CD8-positive, alpha-beta T cell (primary cell): ENCODE measurements at regions of chr3 and their contacts with region 1.

Region 1: GRCh38 chr3:50245831-50246516 is 10.0 kb downstream of the GNAI2 start:
- DNase-seq: peak; percentile 90 to 99 (median 95)
- ATAC-seq: peak; percentile 81
- H3K4me3 ChIP-seq: peak overlapping the region; percentile 40 to 55
- H3K4me3 Mint-ChIP-seq: peak overlapping the region; percentile 75
- H3K27ac ChIP-seq: peak overlapping the region; percentile 32 to 88
- H3K27ac Mint-ChIP-seq: peak overlapping the region; percentile 94
- H3K4me1 ChIP-seq: peaks cover 87% of the 10 kb centered on the region
- H3K4me1 Mint-ChIP-seq: peaks cover 76% of the 10 kb centered on the region
- H3K27me3 ChIP-seq: no peaks in the 10 kb centered on the region
- H3K27me3 Mint-ChIP-seq: no peaks in the 10 kb centered on the region
- CTCF ChIP-seq: peak; percentile 80

Region 2: GRCh38 chr3:50201573-50202315 is 44.2 kb before region 1 on chr3:
- CTCF ChIA-PET with region 1: interaction called, 78 read pairs
- POLR2A ChIA-PET with region 1: no interaction called
- intact Hi-C with region 1: no loop called
- DNase-seq: no peak
- ATAC-seq: no peak
- H3K4me3 ChIP-seq: no peak overlapping the region
- H3K4me3 Mint-ChIP-seq: no peak overlapping the region
- H3K27ac ChIP-seq: no peak overlapping the region
- H3K27ac Mint-ChIP-seq: no peak overlapping the region
- H3K4me1 ChIP-seq: peaks cover 16% of the 10 kb centered on the region
- H3K4me1 Mint-ChIP-seq: peaks cover 6% of the 10 kb centered on the region
- H3K27me3 ChIP-seq: peaks cover 35 to 36% of the 10 kb centered on the region in 2 experiments
- H3K27me3 Mint-ChIP-seq: peaks cover 42% of the 10 kb centered on the region
- CTCF ChIP-seq: no peak

Region 3: DNA sequence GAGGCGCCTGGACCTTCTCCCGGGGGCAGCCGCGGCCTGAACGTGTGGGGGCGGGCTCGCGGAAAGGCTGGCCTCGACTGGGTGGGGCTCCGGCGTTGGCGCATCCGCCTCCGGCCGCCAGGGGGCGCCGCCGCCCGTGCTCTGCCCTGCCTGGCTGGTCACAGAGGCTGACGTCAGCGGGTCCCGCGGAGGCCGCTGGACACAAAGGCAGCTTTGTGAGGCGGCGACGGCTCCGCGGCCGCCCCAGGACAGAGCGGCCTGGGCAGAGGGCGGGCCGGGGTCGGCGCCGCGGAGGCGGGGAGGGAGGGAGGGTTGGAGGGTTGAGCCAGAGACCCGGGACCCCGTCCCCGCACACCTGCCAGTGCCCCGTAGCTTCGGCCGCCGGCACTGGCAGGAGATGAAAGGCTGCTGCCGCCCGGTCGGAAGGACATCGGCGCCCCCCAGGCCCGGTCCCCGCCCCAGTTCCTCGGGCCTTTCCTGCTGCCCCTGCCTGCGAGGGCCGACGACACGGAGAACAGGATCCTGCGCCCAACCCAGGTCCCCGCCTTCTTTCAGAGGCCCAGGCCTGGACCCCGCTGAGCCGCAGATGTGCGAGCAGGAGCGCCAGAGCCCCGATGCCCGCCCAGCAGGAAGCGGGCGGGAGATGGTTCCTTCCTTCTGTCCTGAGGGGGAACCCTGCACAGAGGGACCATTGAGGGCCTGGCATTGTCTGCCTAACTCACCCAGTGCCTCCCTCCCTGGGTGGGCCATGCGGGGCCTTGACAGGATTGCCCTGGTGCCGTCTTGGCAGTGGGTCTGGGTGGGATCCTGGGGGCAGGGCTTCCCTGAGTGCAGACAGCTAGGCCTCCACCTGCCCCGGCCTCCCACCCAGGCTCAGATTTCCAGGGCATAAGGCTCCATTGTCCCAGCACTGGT is 14.3 kb after region 1 on chr3:
- CTCF ChIA-PET with region 1: interaction called, 142 read pairs
- POLR2A ChIA-PET with region 1: interaction called, 7 read pairs
- intact Hi-C with region 1: loop called in 1 of 2 experiments (anchors 1 kb)
- DNase-seq: peak; percentile 55 to 90 (median 81)
- ATAC-seq: peak; percentile 92
- H3K4me3 ChIP-seq: peak overlapping the region; percentile 49 to 53
- H3K4me3 Mint-ChIP-seq: peak overlapping the region; percentile 75
- H3K27ac ChIP-seq: peak overlapping the region; percentile 62 to 68
- H3K27ac Mint-ChIP-seq: peak overlapping the region; percentile 66
- H3K4me1 ChIP-seq: peaks cover 6% of the 10 kb centered on the region
- H3K4me1 Mint-ChIP-seq: peaks cover 7% of the 10 kb centered on the region
- H3K27me3 ChIP-seq: no peaks in the 10 kb centered on the region
- H3K27me3 Mint-ChIP-seq: no peaks in the 10 kb centered on the region
- CTCF ChIP-seq: peak; percentile 92

Region 4: DNA sequence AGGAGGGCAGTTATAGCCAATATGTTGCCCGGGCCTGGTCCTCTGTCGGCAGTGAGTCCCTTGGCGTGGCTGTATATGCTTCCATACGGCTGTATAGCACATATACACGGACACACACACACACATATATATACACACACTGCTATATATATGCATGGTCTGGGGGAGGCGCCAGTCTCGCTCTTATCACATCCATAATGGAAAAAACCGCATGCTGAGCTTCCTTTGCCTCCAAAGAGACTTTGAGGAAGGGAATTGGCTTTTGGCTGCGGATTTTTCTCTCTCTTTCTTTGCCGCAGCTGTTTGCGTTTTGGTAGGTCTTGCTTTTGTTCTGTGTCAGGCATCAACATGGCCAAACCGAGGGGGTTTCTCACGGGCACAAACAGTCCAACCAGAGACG is 124.6 kb after region 1 on chr3:
- CTCF ChIA-PET with region 1: no interaction called
- POLR2A ChIA-PET with region 1: no interaction called
- intact Hi-C with region 1: no loop called
- DNase-seq: no peak
- ATAC-seq: no peak
- H3K4me3 ChIP-seq: no peak overlapping the region
- H3K4me3 Mint-ChIP-seq: no peak overlapping the region
- H3K27ac ChIP-seq: no peak overlapping the region
- H3K27ac Mint-ChIP-seq: no peak overlapping the region
- H3K4me1 ChIP-seq: peaks cover 32% of the 10 kb centered on the region
- H3K4me1 Mint-ChIP-seq: peaks cover 31% of the 10 kb centered on the region
- H3K27me3 ChIP-seq: no peaks in the 10 kb centered on the region
- H3K27me3 Mint-ChIP-seq: no peaks in the 10 kb centered on the region
- CTCF ChIP-seq: no peak